Aorta (tissue), 5 donors: ENCODE measurements at regions of chr3 and their contacts with region 1.

Region 1: GRCh38 chr3:171049861-171050444 is 23.4 kb upstream of the SLC2A2 start:
- DNase-seq: peak in 1 of 2 donors; percentile 54
- ATAC-seq: no peak
- H3K4me3 ChIP-seq: no peak overlapping the region
- H3K27ac ChIP-seq: no peak overlapping the region
- H3K4me1 ChIP-seq: no peaks in the 10 kb centered on the region
- H3K27me3 ChIP-seq: no peaks in the 10 kb centered on the region

Region 2: GRCh38 chr3:171157286-171157685 is 107.3 kb after region 1 on chr3:
- intact Hi-C with region 1: no loop called
- DNase-seq: no peak
- ATAC-seq: no peak
- H3K4me3 ChIP-seq: no peak overlapping the region
- H3K27ac ChIP-seq: no peak overlapping the region
- H3K4me1 ChIP-seq: no peaks in the 10 kb centered on the region
- H3K27me3 ChIP-seq: no peaks in the 10 kb centered on the region

Region 3: GRCh38 chr3:171561596-171562323 is 511.8 kb after region 1 on chr3:
- intact Hi-C with region 1: loop called (anchors 2 to 5 kb)
- DNase-seq: no peak
- ATAC-seq: no peak
- H3K4me3 ChIP-seq: no peak overlapping the region
- H3K27ac ChIP-seq: no peak overlapping the region
- H3K4me1 ChIP-seq: no peaks in the 10 kb centered on the region
- H3K27me3 ChIP-seq: no peaks in the 10 kb centered on the region